Activated naive CD4-positive, alpha-beta T cell treated with anti-CD3 and anti-CD28 coated beads for 36 hours (primary cell): ENCODE measurements at regions of chr2 and their contacts with region 1.

Region 1: GRCh38 chr2:102753563-102754159 is 8.2 kb upstream of the TMEM182 start:
- DNase-seq: peak; percentile 41
- H3K4me3 Mint-ChIP-seq: no peak overlapping the region
- H3K27ac Mint-ChIP-seq: no peak overlapping the region
- H3K4me1 Mint-ChIP-seq: no peaks in the 10 kb centered on the region
- H3K27me3 Mint-ChIP-seq: no peaks in the 10 kb centered on the region

Region 2: DNA sequence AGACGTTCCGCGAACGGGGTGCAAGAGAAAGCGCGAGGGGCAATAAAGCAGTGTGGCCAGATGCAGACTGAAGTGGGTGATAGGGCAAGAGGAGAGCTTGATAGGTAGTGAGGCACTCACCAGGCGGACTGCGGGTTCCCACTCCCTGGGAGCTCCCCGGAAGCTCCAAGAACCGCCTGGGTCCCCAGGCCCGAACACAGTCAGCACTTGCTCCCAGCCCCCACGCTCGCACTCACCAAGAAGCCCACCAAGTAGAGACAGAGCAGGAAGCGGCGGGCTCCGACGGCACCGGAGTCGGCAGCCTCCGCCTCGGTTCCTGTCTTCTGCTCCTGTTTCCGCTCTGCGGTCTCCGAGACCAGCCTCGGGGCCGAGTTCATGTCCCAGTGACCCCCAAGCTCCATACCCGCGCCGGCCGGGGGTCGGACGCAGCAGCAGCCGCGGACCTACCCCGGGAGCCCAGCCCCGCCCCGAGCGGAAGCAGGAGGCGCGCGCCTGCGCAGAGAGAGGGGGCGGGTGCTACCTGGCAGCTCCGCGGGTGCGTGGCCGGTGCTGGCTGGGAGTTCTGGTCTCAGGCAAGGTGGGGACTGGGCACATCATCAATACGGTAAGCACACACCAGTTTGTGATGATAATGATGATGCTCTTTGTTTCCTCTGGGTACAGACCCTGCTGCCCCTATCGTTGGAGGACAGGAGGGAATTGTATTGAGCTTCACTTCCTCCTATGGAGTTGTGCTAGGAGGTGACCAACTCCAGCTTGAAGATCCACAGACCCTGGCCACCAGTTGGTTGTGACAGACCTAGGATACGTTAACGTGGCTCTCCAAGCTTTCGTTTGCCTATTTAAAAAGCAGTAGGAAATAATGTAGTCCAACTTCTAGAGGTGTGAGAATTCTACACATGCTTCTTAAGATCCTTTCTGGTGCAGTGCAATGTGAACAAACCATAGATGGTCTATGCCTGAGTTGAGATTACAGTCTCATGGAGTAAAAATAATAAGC is 17.0 kb before region 1 on chr2:
- CTCF ChIA-PET with region 1: interaction called, 14 read pairs
- intact Hi-C with region 1: no loop called
- DNase-seq: peak; percentile 83
- H3K4me3 Mint-ChIP-seq: peak overlapping the region; percentile 94
- H3K27ac Mint-ChIP-seq: peak overlapping the region; percentile 83
- H3K4me1 Mint-ChIP-seq: peaks cover 38% of the 10 kb centered on the region
- H3K27me3 Mint-ChIP-seq: no peaks in the 10 kb centered on the region

Region 3: GRCh38 chr2:102801098-102801718 is 47.5 kb after region 1 on chr2:
- CTCF ChIA-PET with region 1: interaction called, 47 read pairs
- intact Hi-C with region 1: loop called (anchors 1 kb)
- DNase-seq: peak; percentile 10
- H3K4me3 Mint-ChIP-seq: no peak overlapping the region
- H3K27ac Mint-ChIP-seq: no peak overlapping the region
- H3K4me1 Mint-ChIP-seq: peaks cover 9% of the 10 kb centered on the region
- H3K27me3 Mint-ChIP-seq: no peaks in the 10 kb centered on the region

Region 4: DNA sequence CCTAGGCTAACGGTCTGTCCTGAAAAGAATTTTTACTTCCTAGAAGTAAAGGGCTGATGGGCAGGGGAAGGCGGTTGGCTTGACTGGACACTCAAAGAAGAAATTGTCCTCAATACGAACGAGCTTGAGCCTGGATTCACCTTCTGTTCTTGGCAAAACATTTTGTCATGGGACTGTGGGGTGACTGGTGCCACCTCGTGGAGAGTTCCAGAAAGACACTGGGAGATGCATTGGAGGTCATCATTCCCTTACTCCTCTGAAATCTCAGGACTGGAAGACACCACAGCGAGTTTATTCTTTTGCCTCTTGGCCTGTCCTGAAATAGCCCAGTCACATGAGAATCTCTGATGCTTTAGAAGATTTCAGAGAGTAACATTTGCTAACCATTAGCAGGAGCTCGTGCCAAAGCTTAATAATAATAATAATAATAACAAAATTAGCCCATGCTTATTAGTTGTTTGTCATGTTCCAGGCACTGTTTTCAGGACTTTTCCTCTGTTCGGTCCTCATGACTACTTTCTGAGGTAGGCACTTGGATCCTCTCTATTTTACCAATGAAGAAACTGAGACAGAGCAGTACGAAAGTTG is 52.7 kb after region 1 on chr2:
- CTCF ChIA-PET with region 1: interaction called, 47 read pairs
- intact Hi-C with region 1: loop called (anchors 1 kb)
- DNase-seq: peak; percentile 60
- H3K4me3 Mint-ChIP-seq: no peak overlapping the region
- H3K27ac Mint-ChIP-seq: no peak overlapping the region
- H3K4me1 Mint-ChIP-seq: peaks cover 14% of the 10 kb centered on the region
- H3K27me3 Mint-ChIP-seq: no peaks in the 10 kb centered on the region